ENCODE measurements at regions of chr3 and their contacts with region 1.

Region 1: GRCh38 chr3:123559040-123559861 is 25.6 kb downstream of the HACD2 start:
- DNase-seq: no peak
- H3K4me3 ChIP-seq: no peak overlapping the region
- CTCF ChIP-seq: peak; percentile 34

Region 2: DNA sequence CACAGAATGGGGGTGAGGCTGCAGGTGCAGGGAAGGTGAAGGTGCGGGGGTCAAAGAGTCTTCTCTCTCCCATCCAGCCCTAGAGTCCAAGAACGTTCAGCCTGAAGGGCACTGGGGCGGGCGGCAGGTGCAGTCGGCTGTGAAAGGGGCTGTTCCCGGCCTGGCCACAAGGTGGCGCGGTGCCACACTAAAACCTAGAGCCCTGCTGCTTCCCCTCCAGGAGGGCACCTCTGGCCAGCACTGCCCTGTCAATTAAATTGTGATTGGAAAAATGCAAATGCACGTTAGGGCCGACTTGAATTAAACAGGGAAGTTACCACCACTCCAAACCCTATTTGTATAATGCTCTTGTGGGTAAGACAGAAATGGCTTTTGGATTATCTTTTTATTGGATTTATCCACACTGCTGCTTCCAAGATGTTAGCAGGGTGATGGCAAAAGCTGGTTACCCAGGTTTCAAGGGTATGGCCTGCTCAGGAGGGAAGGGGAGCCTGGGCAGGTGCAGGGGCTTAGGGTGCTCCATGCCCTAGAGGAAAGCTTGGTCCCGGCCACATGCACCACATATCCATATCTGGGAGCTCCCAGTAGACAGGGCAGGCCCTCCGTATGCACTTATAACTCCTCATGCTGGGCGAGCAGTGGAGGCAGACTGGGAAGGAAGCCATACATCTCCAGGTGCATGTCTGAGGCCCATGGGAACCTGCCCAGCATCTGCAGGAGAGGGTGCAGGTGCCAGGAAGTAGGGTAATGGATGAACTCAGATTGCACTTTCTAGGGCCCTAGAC is 230.2 kb before region 1 on chr3:
- CTCF ChIA-PET with region 1: interaction called, 250 read pairs
- POLR2A ChIA-PET with region 1: interaction called, 3 read pairs
- DNase-seq: no peak
- H3K4me3 ChIP-seq: no peak overlapping the region
- CTCF ChIP-seq: peak; percentile 94

Region 3: DNA sequence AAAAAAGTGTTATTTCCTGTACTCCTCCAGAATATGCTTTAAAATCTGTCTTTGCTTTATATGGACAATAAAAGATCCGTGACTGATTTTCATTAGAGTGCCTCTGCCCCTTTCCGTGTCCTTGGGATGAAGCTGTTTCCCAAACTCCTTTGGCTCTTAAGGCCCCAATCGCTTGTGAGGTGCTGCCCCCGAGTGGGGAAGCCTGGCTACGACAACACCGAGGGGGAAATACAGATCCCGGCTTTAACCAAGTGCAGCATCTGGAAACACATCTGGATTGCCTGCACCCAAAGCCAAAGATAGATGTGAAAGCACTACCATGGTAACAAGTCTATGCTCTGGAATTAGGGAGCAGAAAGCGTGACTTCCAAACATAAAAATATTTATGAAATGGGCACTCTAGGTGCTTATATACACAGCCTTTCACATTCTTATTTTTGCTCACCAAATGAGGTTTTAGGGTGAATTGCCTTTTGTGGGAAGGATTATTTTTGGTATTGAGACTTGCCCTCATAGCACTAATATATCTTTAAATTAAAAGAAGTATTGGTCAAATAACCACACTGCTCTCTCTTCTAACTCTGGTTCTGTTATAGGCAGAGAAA is 69.7 kb before region 1 on chr3:
- CTCF ChIA-PET with region 1: interaction called, 35 read pairs
- POLR2A ChIA-PET with region 1: no interaction called
- DNase-seq: no peak
- H3K4me3 ChIP-seq: no peak overlapping the region
- CTCF ChIP-seq: peak; percentile 92

Region 4: DNA sequence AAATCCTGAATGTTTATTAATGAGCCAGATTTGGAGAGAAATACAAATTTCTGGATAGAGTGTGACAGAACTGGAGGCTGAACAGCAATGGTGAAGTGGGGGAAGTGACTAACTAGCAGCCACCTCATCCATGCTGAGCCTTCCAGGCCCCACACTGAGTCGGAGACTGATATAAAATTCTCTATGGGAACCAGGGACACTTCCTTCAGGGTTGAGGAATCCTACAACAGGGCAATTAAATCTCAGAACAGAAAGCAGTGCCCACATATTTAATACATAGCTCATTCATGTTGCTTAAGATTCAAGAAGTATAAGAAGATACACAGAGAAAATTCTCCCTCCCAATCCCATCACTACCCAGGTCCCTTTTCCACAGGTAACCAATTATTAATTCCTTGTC is 23.7 kb before region 1 on chr3:
- CTCF ChIA-PET with region 1: interaction called, 48 read pairs
- POLR2A ChIA-PET with region 1: no interaction called
- DNase-seq: peak; percentile 63
- H3K4me3 ChIP-seq: no peak overlapping the region
- CTCF ChIP-seq: no peak

Region 5: GRCh38 chr3:123584988-123585937 is 26.0 kb after region 1 on chr3 and contains the start of gene HACD2:
- CTCF ChIA-PET with region 1: interaction called, 99 read pairs
- POLR2A ChIA-PET with region 1: no interaction called
- DNase-seq: peak; percentile 85
- H3K4me3 ChIP-seq: peak within 1 kb of the TSS; percentile 76
- CTCF ChIP-seq: no peak

Region 6: GRCh38 chr3:123732473-123733157 is 173.4 kb after region 1 on chr3:
- CTCF ChIA-PET with region 1: no interaction called
- POLR2A ChIA-PET with region 1: no interaction called
- DNase-seq: no peak
- H3K4me3 ChIP-seq: no peak overlapping the region
- CTCF ChIP-seq: no peak

Measured in AG04449 (cell line).